Colonic mucosa (tissue), 4 donors: ENCODE measurements at regions of chr11 and their contacts with region 1.

Region 1: GRCh38 chr11:73661035-73661628 is 14.8 kb downstream of the PLEKHB1 start:
- DNase-seq: peak; percentile 93
- H3K4me3 ChIP-seq: peak overlapping the region; percentile 19
- H3K27ac ChIP-seq: no peak overlapping the region
- H3K4me1 ChIP-seq: peaks cover 6% of the 10 kb centered on the region
- H3K27me3 ChIP-seq: no peaks in the 10 kb centered on the region
- CTCF ChIP-seq: peak; percentile 89

Region 2: DNA sequence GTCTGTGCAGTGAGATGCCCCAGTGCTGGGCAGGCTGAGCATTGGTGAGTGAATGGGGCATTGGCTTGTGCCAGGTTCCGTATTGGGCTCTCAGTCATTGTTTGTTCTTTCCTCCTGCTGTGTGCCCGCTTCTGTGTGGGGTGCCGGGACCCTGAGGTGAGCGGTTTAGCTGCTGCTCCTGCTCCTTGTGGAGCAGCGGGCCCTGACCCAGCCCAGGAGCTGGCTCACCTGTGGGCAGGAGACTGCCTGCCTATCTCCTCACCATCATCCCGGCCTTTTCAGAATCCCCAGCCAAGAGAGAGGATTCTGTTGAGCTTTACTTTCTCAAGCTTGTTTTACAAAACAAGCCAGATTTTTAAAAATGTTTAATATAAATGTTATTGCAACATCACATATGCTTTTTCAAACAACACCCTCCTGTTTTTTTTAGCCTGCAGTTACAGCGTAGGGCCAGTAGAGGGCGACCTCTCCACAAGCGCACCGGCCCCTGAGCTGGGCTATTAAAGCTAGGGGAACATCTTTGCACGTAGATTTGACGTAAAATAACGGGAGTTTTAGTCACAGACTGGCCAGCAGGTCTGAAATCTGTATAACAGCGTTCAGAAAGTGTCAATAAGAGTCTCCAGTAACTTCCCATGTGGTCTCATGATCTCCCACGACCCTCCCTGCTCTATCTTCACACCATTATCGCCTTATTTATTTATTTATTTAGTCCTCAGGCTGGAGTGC is 310.1 kb before region 1 on chr11:
- intact Hi-C with region 1: loop called (anchors 2 kb)
- DNase-seq: peak; percentile 35
- H3K4me3 ChIP-seq: no peak overlapping the region
- H3K27ac ChIP-seq: no peak overlapping the region
- H3K4me1 ChIP-seq: peaks cover 3% of the 10 kb centered on the region
- H3K27me3 ChIP-seq: no peaks in the 10 kb centered on the region
- CTCF ChIP-seq: peak; percentile 95

Region 3: GRCh38 chr11:73401217-73401923 is 259.8 kb before region 1 on chr11:
- intact Hi-C with region 1: loop called (anchors 2 kb)
- DNase-seq: no peak
- H3K4me3 ChIP-seq: no peak overlapping the region
- H3K27ac ChIP-seq: no peak overlapping the region
- H3K4me1 ChIP-seq: no peaks in the 10 kb centered on the region
- H3K27me3 ChIP-seq: no peaks in the 10 kb centered on the region
- CTCF ChIP-seq: no peak

Region 4: DNA sequence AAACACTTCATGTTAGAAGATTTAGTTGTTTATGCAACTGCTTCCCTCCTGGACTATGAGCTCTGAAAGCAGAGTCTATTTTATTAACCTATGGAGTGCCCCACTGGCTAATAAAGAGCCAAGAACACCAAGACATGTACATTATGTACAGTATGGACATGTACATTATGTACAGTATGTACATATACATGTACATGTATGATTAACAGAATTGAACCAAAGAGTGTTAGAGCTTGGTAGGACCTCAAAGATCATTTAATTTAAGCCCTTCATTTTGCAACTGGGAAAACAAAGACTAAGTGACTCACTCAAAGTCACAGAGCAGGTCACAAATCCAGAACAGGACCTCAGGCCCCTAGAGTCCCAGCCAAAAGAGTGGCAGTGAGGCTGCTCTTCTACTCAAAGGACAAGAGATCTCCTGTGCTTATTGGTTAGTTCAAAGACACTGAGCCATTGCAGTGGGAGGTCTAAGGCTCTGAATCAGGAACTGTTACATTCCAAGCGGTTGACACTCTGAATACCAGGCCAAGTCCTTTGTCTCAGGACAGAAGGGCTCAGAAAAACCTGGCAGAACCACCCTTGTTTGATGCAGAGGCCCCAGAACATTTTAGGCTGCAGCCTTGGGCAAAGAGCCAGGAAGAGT is 167.1 kb before region 1 on chr11:
- intact Hi-C with region 1: loop called (anchors 5 kb)
- DNase-seq: no peak
- H3K4me3 ChIP-seq: no peak overlapping the region
- H3K27ac ChIP-seq: no peak overlapping the region
- H3K4me1 ChIP-seq: no peaks in the 10 kb centered on the region
- H3K27me3 ChIP-seq: no peaks in the 10 kb centered on the region
- CTCF ChIP-seq: no peak

Region 5: GRCh38 chr11:73625696-73626318 is 35.3 kb before region 1 on chr11:
- intact Hi-C with region 1: loop called (anchors 2 kb)
- DNase-seq: peak; percentile 79
- H3K4me3 ChIP-seq: no peak overlapping the region
- H3K27ac ChIP-seq: no peak overlapping the region
- H3K4me1 ChIP-seq: no peaks in the 10 kb centered on the region
- H3K27me3 ChIP-seq: no peaks in the 10 kb centered on the region
- CTCF ChIP-seq: peak; percentile 95

Region 6: DNA sequence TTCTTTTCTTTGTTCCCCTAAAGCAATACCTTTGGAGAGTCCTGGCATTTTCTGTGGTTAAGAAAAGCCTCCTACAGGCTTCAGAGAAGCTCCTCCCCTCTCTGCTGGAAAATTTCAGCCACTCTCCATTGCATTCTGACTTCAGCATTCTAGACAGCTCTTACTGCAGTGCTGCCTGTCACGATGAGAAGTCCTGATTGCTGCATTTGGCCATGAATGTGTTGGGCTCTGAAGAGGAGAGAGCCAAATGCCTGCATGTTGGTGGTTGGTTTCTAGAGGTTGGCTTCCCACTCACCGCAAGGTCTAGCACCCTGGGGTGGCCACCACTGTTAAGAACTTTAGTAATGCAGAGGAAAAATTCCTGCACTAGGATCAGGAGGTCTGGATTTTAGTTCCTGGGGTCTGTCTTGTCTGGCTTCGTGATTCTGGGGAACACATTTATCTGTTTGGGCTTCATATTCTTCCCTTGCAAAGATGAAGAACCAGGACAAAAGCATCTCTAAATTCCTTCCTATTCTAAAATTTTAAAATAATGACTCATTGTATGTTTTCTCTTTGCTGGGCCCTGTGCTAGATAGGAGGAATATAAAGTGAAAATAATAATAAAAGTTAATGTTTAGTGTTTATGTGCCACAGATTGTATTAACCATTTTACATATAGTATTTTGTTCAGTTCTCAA is 177.5 kb after region 1 on chr11:
- intact Hi-C with region 1: no loop called
- DNase-seq: no peak
- H3K4me3 ChIP-seq: no peak overlapping the region
- H3K27ac ChIP-seq: no peak overlapping the region
- H3K4me1 ChIP-seq: no peaks in the 10 kb centered on the region
- H3K27me3 ChIP-seq: no peaks in the 10 kb centered on the region
- CTCF ChIP-seq: no peak